Activated CD4-positive, alpha-beta T cell treated with anti-CD3 and anti-CD28 coated beads for 36 hours (primary cell): ENCODE measurements at regions of chr10 and their contacts with region 1.

Region 1: DNA sequence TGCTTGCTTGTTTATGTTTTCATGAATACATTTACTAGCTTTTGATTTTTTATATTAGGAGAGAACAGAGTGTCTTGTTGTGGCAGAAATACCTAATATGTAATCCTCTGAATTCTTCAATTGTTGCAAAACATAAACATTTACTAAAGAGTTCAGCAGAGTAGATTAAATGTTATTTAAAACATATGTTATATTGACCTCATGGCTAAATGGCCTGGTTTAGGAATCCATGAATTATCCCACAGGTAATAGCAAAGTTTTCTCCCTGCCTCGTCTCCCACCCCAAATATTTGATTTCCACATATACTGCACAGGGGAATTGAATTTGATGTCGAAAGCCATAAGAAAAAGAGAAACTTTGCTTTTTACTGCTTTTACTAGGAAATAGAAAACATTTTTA is 111.8 kb downstream of the ADK start:
- DNase-seq: no peak
- ATAC-seq: no peak
- H3K4me3 Mint-ChIP-seq: no peak overlapping the region
- H3K27ac Mint-ChIP-seq: no peak overlapping the region
- H3K4me1 Mint-ChIP-seq: peaks cover 17% of the 10 kb centered on the region
- H3K27me3 Mint-ChIP-seq: no peaks in the 10 kb centered on the region

Region 2: GRCh38 chr10:72802763-72803505 is 1459.9 kb before region 1 on chr10:
- CTCF ChIA-PET with region 1: no interaction called
- POLR2A ChIA-PET with region 1: no interaction called
- intact Hi-C with region 1: no loop called
- DNase-seq: no peak
- ATAC-seq: peak; percentile 63
- H3K4me3 Mint-ChIP-seq: no peak overlapping the region
- H3K27ac Mint-ChIP-seq: no peak overlapping the region
- H3K4me1 Mint-ChIP-seq: peaks cover 23% of the 10 kb centered on the region
- H3K27me3 Mint-ChIP-seq: no peaks in the 10 kb centered on the region

Region 3: GRCh38 chr10:74419958-74420375 is 157.1 kb after region 1 on chr10:
- CTCF ChIA-PET with region 1: no interaction called
- POLR2A ChIA-PET with region 1: no interaction called
- intact Hi-C with region 1: loop called in 1 of 2 experiments (anchors 5 kb)
- DNase-seq: peak; percentile 48
- ATAC-seq: peak; percentile 53
- H3K4me3 Mint-ChIP-seq: no peak overlapping the region
- H3K27ac Mint-ChIP-seq: no peak overlapping the region
- H3K4me1 Mint-ChIP-seq: peaks cover 4% of the 10 kb centered on the region
- H3K27me3 Mint-ChIP-seq: no peaks in the 10 kb centered on the region

Region 4: DNA sequence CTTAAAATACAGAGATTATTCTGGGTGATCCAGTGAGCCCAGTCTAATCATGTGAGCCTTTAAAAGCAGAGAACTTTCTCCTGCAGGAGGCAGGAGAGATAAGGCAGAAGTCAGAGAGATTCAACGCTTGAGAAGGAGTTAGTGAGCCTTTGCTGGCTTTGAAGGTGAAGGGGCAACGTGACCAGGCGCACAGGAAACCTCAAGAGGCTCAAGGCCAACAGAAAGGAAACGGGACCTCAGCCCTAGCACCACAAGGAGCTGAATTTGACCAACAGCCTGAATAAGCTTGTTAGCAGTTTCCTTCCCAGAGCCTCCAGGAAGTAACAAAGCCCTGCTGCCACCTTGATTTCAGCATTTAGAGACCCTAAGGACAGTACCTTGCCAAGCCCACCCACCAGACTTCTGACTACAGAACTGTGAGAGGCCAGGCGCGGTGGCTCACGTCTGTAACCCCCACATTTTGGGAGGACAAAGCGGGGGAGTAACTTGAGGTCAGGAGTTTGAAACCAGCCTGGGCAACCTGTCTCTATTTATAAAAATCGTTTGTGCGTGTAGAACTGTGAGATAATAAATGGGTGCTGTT is 476.2 kb after region 1 on chr10:
- CTCF ChIA-PET with region 1: no interaction called
- POLR2A ChIA-PET with region 1: no interaction called
- intact Hi-C with region 1: loop called in 1 of 2 experiments (anchors 5 kb)
- DNase-seq: peak; percentile 32
- ATAC-seq: peak; percentile 65
- H3K4me3 Mint-ChIP-seq: no peak overlapping the region
- H3K27ac Mint-ChIP-seq: peak overlapping the region; percentile 76
- H3K4me1 Mint-ChIP-seq: peaks cover 15% of the 10 kb centered on the region
- H3K27me3 Mint-ChIP-seq: no peaks in the 10 kb centered on the region

Region 5: GRCh38 chr10:75029857-75030256 is 767.0 kb after region 1 on chr10:
- CTCF ChIA-PET with region 1: no interaction called
- POLR2A ChIA-PET with region 1: no interaction called
- intact Hi-C with region 1: no loop called
- DNase-seq: no peak
- ATAC-seq: no peak
- H3K4me3 Mint-ChIP-seq: no peak overlapping the region
- H3K27ac Mint-ChIP-seq: no peak overlapping the region
- H3K4me1 Mint-ChIP-seq: peaks cover 21% of the 10 kb centered on the region
- H3K27me3 Mint-ChIP-seq: no peaks in the 10 kb centered on the region